Sciatic nerve (tissue), 2 donors: ENCODE measurements at regions of chr3 and their contacts with region 1.

Region 1: DNA sequence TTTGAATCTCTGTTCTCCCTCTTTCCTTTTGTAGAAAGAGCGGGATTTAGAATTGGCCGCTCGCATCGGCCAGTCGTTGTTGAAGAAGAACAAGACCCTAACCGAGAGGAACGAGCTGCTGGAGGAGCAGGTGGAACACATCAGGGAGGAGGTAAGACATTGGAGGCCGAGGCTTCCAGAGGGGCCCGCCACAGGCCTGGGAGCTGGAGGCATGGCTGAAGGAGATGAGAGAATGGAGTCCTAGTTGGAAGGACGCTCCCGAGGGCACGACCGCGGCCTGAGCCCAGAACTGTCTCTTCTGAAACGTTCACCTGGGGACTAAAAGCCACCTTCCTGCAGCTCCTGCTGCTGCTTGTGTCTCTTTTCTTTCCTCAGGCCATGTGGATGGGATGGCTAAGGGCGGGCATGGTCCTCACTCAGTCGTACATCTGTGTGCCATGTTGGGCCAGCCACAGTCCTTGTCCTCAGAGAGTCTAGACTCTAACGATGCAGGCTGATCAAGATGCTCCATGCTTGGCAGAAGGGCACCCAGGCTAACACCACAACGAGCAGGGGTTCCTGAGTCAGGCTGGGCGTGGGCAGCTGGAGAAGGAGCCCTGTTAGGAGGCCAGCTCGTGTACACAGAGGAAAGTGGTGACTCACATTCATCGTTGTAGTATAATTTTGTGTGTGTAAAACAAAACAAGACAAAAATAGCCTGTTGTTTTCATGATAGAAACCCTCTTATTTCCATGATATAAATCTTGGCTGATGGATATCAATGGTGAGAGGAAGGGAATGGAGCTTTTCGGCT is 81.1 kb downstream of the CCK start:
- DNase-seq: no peak
- ATAC-seq: no peak

Region 2: GRCh38 chr3:42122651-42123581 is 61.9 kb before region 1 on chr3:
- intact Hi-C with region 1: loop called (anchors 10 kb)
- DNase-seq: no peak
- ATAC-seq: no peak

Region 3: GRCh38 chr3:42518800-42519567 is 334.1 kb after region 1 on chr3:
- intact Hi-C with region 1: no loop called
- DNase-seq: no peak
- ATAC-seq: no peak

Region 4: GRCh38 chr3:42711491-42712343 is 526.9 kb after region 1 on chr3:
- intact Hi-C with region 1: no loop called
- DNase-seq: peak; percentile 35
- ATAC-seq: no peak